Naive thymus-derived CD4-positive, alpha-beta T cell (primary cell): ENCODE measurements at regions of chr14 and their contacts with region 1.

Region 1: GRCh38 chr14:34982417-34983147 is at the start of gene SRP54:
- DNase-seq: peak; percentile 97 to 100 (median 100)
- ATAC-seq: peak; percentile 96
- H3K4me3 ChIP-seq: peak within 1 kb of the TSS; percentile 82
- H3K4me3 Mint-ChIP-seq: no peak within 1 kb of the TSS
- H3K27ac ChIP-seq: peak within 1 kb of the TSS; percentile 98
- H3K27ac Mint-ChIP-seq: no peak within 1 kb of the TSS
- H3K4me1 ChIP-seq: peaks cover 22% of the 10 kb centered on the region in 2 donors
- H3K4me1 Mint-ChIP-seq: peaks cover 0 to 30% (median 9%) of the 10 kb centered on the region in 7 donors
- H3K27me3 ChIP-seq: no peaks in the 10 kb centered on the region
- H3K27me3 Mint-ChIP-seq: no peaks in the 10 kb centered on the region
- total RNA-seq, gene SRP54: 35.8 to 61.4 (median 52.0) TPM

Region 2: GRCh38 chr14:34461334-34462131 is 521.0 kb before region 1 on chr14:
- CTCF ChIA-PET with region 1: no interaction called
- POLR2A ChIA-PET with region 1: no interaction called
- intact Hi-C with region 1: loop called in 1 of 2 experiments (anchors 5 kb)
- DNase-seq: peak in 7 of 9 donors; percentile 2 to 22 (median 16)
- ATAC-seq: peak; percentile 4
- H3K4me3 ChIP-seq: peak overlapping the region; percentile 70
- H3K4me3 Mint-ChIP-seq: peak overlapping the region; percentile 83 to 97 (median 89)
- H3K27ac ChIP-seq: peak overlapping the region; percentile 78
- H3K27ac Mint-ChIP-seq: peak overlapping the region; percentile 60 to 94 (median 86)
- H3K4me1 ChIP-seq: peaks cover 0 to 6% of the 10 kb centered on the region in 2 donors
- H3K4me1 Mint-ChIP-seq: peaks cover 11 to 25% (median 15%) of the 10 kb centered on the region in 7 donors
- H3K27me3 ChIP-seq: no peaks in the 10 kb centered on the region
- H3K27me3 Mint-ChIP-seq: no peaks in the 10 kb centered on the region

Region 3: GRCh38 chr14:34671716-34672115 is 310.9 kb before region 1 on chr14:
- CTCF ChIA-PET with region 1: interaction called, 3 read pairs
- POLR2A ChIA-PET with region 1: no interaction called
- intact Hi-C with region 1: loop called in 1 of 2 experiments (anchors 5 kb)
- DNase-seq: no peak
- ATAC-seq: no peak
- H3K4me3 ChIP-seq: no peak overlapping the region
- H3K4me3 Mint-ChIP-seq: no peak overlapping the region
- H3K27ac ChIP-seq: no peak overlapping the region
- H3K27ac Mint-ChIP-seq: no peak overlapping the region
- H3K4me1 ChIP-seq: no peaks in the 10 kb centered on the region
- H3K4me1 Mint-ChIP-seq: peaks cover 0 to 1% (median 0%) of the 10 kb centered on the region in 7 donors
- H3K27me3 ChIP-seq: no peaks in the 10 kb centered on the region
- H3K27me3 Mint-ChIP-seq: peaks cover 0 to 2% (median 0%) of the 10 kb centered on the region in 5 donors

Region 4: GRCh38 chr14:34875031-34875922 is 107.3 kb before region 1 on chr14 and contains the start of gene BAZ1A:
- CTCF ChIA-PET with region 1: interaction called, 4 read pairs
- POLR2A ChIA-PET with region 1: interaction called, 68 read pairs
- intact Hi-C with region 1: loop called (anchors 1 kb)
- DNase-seq: peak; percentile 26 to 61 (median 55)
- ATAC-seq: peak; percentile 14
- H3K4me3 ChIP-seq: peak within 1 kb of the TSS; percentile 85
- H3K4me3 Mint-ChIP-seq: peak within 1 kb of the TSS; percentile 91 to 100 (median 99)
- H3K27ac ChIP-seq: peak within 1 kb of the TSS; percentile 96
- H3K27ac Mint-ChIP-seq: peak within 1 kb of the TSS; percentile 94 to 100 (median 99)
- H3K4me1 ChIP-seq: peaks cover 10 to 19% of the 10 kb centered on the region in 2 donors
- H3K4me1 Mint-ChIP-seq: peaks cover 18 to 40% (median 34%) of the 10 kb centered on the region in 7 donors
- H3K27me3 ChIP-seq: no peaks in the 10 kb centered on the region
- H3K27me3 Mint-ChIP-seq: no peaks in the 10 kb centered on the region
- total RNA-seq, gene BAZ1A: 47.4 to 62.5 (median 53.3) TPM

Region 5: DNA sequence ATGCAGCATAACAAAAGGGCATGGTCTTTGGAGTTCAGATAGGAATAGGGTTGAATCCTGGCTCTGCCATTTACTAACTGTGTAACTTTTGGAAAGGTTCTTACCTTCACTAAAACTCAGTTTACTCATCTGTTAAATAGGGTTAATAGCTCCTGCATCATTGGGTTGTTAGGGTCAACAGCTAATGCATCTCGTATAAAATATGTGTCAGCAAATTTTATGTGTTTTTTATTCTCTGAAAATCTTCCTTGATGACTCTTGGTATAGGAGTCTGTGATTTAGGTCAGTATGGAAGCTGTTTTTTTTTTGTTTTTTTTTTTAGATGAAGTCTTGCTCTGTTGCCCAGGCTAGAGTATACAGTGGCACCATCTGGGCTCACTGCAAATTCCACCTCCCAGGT is 35.9 kb before region 1 on chr14:
- CTCF ChIA-PET with region 1: no interaction called
- POLR2A ChIA-PET with region 1: no interaction called
- intact Hi-C with region 1: no loop called
- DNase-seq: no peak
- ATAC-seq: no peak
- H3K4me3 ChIP-seq: no peak overlapping the region
- H3K4me3 Mint-ChIP-seq: no peak overlapping the region
- H3K27ac ChIP-seq: no peak overlapping the region
- H3K27ac Mint-ChIP-seq: peak overlapping the region in 8 of 9 donors; percentile 17 to 82 (median 29)
- H3K4me1 ChIP-seq: no peaks in the 10 kb centered on the region
- H3K4me1 Mint-ChIP-seq: peaks cover 0 to 4% (median 4%) of the 10 kb centered on the region in 7 donors
- H3K27me3 ChIP-seq: no peaks in the 10 kb centered on the region
- H3K27me3 Mint-ChIP-seq: no peaks in the 10 kb centered on the region

Region 6: GRCh38 chr14:34966413-34966812 is 16.2 kb before region 1 on chr14:
- CTCF ChIA-PET with region 1: no interaction called
- POLR2A ChIA-PET with region 1: interaction called, 7 read pairs
- intact Hi-C with region 1: loop called (anchors 1 to 2 kb)
- DNase-seq: no peak
- ATAC-seq: no peak
- H3K4me3 ChIP-seq: no peak overlapping the region
- H3K4me3 Mint-ChIP-seq: no peak overlapping the region
- H3K27ac ChIP-seq: no peak overlapping the region
- H3K27ac Mint-ChIP-seq: peak overlapping the region in 6 of 9 donors; percentile 4 to 81 (median 50)
- H3K4me1 ChIP-seq: no peaks in the 10 kb centered on the region
- H3K4me1 Mint-ChIP-seq: peaks cover 0 to 18% (median 7%) of the 10 kb centered on the region in 7 donors
- H3K27me3 ChIP-seq: no peaks in the 10 kb centered on the region
- H3K27me3 Mint-ChIP-seq: no peaks in the 10 kb centered on the region

Region 7: DNA sequence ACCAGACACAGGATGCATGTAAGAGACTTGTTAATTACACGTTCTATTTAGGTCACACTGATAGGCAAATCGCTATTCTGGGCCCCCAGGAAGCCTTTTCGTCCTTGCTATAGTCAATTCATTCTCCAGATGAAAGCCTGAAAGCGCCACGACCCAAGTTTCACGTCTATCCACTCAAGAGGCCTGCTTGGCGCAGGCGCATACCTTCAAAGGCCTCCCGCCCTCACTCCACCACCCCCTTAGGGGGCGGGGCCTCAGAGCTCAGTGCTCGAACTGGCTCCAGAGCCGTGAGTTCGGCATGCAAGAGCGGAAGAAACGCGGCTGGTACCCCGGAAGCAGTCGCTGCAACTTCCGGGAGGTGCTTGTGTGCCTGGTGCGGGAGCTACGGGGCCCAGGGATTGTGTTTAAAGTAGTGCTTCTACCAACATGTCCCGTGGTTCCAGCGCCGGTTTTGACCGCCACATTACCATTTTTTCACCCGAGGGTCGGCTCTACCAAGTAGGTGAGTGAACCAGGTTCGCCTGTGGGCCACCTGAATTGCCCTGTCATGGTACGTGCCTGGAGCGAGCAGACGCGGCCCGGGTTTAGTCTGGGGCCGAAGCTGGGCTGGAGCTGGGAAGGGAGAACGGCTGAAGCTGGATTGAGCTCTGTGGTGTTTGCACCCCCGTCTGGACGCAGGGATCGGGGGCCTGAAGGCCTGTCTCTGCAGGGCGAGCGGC is 309.6 kb after region 1 on chr14 and contains the start of gene PSMA6:
- CTCF ChIA-PET with region 1: no interaction called
- POLR2A ChIA-PET with region 1: interaction called, 6 read pairs
- intact Hi-C with region 1: loop called (anchors 1 kb)
- DNase-seq: peak; percentile 96 to 99 (median 99)
- ATAC-seq: peak; percentile 99
- H3K4me3 ChIP-seq: peak within 1 kb of the TSS; percentile 89
- H3K4me3 Mint-ChIP-seq: peak within 1 kb of the TSS; percentile 92 to 99 (median 97)
- H3K27ac ChIP-seq: peak within 1 kb of the TSS; percentile 90
- H3K27ac Mint-ChIP-seq: peak within 1 kb of the TSS; percentile 94 to 99 (median 96)
- H3K4me1 ChIP-seq: peaks cover 16 to 22% of the 10 kb centered on the region in 2 donors
- H3K4me1 Mint-ChIP-seq: peaks cover 17 to 54% (median 51%) of the 10 kb centered on the region in 7 donors
- H3K27me3 ChIP-seq: no peaks in the 10 kb centered on the region
- H3K27me3 Mint-ChIP-seq: no peaks in the 10 kb centered on the region
- total RNA-seq, gene PSMA6: 76.6 to 274 (median 90.0) TPM

Region 8: DNA sequence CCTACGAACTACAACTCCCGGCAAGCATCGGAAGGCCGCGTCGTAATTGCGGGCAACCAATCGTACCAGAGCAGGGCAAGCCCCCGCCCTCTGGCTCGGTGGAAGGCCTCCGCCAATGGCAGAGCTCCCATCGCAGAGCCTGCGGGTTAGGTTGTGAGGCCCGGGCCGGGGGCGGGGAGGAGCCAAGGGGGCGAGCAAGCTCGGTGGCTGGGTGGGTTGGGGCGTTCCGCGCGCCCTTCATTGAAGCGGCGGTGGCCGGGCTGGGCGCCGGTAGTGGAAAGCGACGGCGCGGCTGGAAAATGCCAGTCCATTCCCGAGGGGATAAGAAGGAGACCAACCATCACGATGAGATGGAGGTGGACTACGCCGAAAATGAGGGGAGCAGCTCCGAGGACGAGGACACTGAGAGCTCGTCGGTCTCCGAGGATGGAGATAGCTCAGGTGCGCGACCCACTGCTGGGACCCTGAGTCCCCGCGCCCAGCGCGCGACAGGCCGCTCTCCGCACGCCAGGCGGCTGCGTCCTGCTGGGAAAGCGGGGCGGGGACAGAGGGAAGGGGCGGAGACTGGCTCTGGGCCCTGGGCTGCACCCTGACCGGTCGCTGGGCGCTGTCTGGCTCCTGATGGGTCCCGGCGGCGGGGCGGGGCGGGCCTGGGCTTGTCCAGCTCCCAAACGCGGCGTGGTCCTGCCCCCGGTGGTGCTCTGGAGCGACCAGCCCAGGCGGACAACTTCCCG is 843.8 kb after region 1 on chr14 and contains the start of gene BRMS1L:
- CTCF ChIA-PET with region 1: no interaction called
- POLR2A ChIA-PET with region 1: no interaction called
- intact Hi-C with region 1: loop called (anchors 1 kb)
- DNase-seq: peak; percentile 88 to 97 (median 96)
- ATAC-seq: peak; percentile 99
- H3K4me3 ChIP-seq: peak within 1 kb of the TSS; percentile 95
- H3K4me3 Mint-ChIP-seq: peak within 1 kb of the TSS; percentile 84 to 96 (median 90)
- H3K27ac ChIP-seq: peak within 1 kb of the TSS; percentile 87
- H3K27ac Mint-ChIP-seq: peak within 1 kb of the TSS; percentile 53 to 94 (median 88)
- H3K4me1 ChIP-seq: peaks cover 6 to 8% of the 10 kb centered on the region in 2 donors
- H3K4me1 Mint-ChIP-seq: peaks cover 11 to 31% (median 25%) of the 10 kb centered on the region in 7 donors
- H3K27me3 ChIP-seq: no peaks in the 10 kb centered on the region
- H3K27me3 Mint-ChIP-seq: no peaks in the 10 kb centered on the region
- total RNA-seq, gene BRMS1L: 4.2 to 8.6 (median 5.8) TPM